ENCODE measurements at regions of chr1 and their contacts with region 1.

Region 1: GRCh38 chr1:185681034-185681633 is 53.1 kb upstream of the HMCN1 start:
- DNase-seq: peak; percentile 52
- H3K27ac ChIP-seq: no peak overlapping the region
- CTCF ChIP-seq: peak; percentile 69

Region 2: DNA sequence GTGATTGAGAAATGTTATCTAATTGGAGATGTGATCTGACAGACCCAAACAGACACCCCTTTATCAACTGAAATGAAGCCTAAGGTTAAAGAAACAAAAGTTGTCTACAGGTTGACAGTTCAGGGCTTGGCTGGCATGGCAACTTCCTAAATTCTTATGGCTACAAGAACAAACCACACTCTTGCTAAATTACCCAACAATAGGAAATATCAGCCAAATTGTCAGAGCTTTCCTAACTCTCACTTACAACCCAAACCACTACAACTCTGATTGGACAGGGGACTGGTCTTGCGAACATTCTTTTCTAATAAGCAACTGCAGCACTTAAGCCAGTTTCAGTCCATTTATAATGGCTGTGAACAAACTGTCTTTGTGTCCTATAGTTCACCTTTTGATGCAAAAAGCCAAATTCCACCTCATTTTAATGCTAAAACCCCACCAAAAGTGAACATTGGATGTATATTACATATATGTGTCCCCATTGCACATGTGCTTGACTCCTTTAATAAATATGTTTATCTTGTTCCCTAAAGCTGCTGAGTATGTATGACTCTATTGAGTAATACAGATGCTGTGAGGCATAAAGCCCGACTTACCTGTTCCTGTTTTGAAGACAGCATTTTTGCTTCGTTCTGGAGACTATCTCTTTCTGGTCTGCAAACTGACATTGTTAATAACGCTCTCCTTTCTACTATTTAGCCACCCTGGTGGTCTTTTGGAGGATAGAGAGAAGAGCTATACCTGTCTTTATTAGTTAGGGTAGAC is 48.3 kb before region 1 on chr1:
- CTCF ChIA-PET with region 1: no interaction called
- POLR2A ChIA-PET with region 1: no interaction called
- DNase-seq: no peak
- H3K27ac ChIP-seq: no peak overlapping the region
- CTCF ChIP-seq: no peak

Region 3: GRCh38 chr1:185656663-185657062 is 24.5 kb before region 1 on chr1:
- CTCF ChIA-PET with region 1: no interaction called
- POLR2A ChIA-PET with region 1: no interaction called
- DNase-seq: no peak
- H3K27ac ChIP-seq: no peak overlapping the region
- CTCF ChIP-seq: no peak

Region 4: GRCh38 chr1:185670187-185670627 is 10.9 kb before region 1 on chr1:
- CTCF ChIA-PET with region 1: interaction called, 11 read pairs
- POLR2A ChIA-PET with region 1: no interaction called
- DNase-seq: peak; percentile 34
- H3K27ac ChIP-seq: no peak overlapping the region
- CTCF ChIP-seq: peak; percentile 41

Measured in RWPE1 (cell line).